GM12878 (cell line): ENCODE measurements at regions of chr3 and their contacts with region 1.

Region 1: DNA sequence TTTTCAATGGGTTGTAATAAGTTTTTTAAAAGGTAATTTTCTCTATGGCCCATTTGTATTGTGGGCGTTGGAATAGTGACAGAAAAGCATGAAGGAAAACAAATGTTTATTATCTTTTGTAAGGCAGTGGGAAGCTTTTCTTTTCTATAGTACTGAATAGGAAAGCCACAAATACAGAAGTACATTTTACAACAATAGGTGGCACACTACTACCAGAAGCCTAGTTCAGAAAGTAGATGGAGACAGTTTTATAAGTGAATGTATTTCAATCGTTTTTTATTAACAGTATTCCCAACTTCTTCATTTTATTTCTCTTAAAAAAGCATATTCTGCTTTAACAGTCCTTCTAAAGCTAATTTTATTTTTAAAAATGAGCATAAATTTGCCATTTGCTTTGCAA is 296.7 kb downstream of the PTPRG start:
- DNase-seq: no peak
- ATAC-seq: peak; percentile 53
- H3K4me3 ChIP-seq: no peak overlapping the region
- H3K27ac ChIP-seq: no peak overlapping the region
- H3K4me1 ChIP-seq: no peaks in the 10 kb centered on the region
- H3K27me3 ChIP-seq: peaks cover 0 to 3% of the 10 kb centered on the region in 2 experiments; a peak in 1 of 4 replicates
- CTCF ChIP-seq: peak; percentile 27 to 65 (median 29); a peak in 3 of 6 replicates
- EP300 ChIP-seq: no peak
- POLR2A ChIP-seq: no peak
- RAD21 ChIP-seq: peak; percentile 62

Region 2: GRCh38 chr3:61841111-61841853 is 16.8 kb before region 1 on chr3:
- CTCF ChIA-PET with region 1: interaction called, 13 read pairs
- POLR2A ChIA-PET with region 1: interaction called, 5 read pairs
- RAD21 ChIA-PET with region 1: interaction called, 8 read pairs
- SMC1A ChIA-PET with region 1: interaction called, 30 read pairs
- in situ Hi-C with region 1: no loop called
- intact Hi-C with region 1: no loop called
- DNase-seq: no peak
- ATAC-seq: no peak
- H3K4me3 ChIP-seq: no peak overlapping the region
- H3K27ac ChIP-seq: no peak overlapping the region
- H3K4me1 ChIP-seq: no peaks in the 10 kb centered on the region
- H3K27me3 ChIP-seq: no peaks in the 10 kb centered on the region
- CTCF ChIP-seq: no peak
- EP300 ChIP-seq: no peak
- POLR2A ChIP-seq: no peak
- RAD21 ChIP-seq: no peak

Region 3: DNA sequence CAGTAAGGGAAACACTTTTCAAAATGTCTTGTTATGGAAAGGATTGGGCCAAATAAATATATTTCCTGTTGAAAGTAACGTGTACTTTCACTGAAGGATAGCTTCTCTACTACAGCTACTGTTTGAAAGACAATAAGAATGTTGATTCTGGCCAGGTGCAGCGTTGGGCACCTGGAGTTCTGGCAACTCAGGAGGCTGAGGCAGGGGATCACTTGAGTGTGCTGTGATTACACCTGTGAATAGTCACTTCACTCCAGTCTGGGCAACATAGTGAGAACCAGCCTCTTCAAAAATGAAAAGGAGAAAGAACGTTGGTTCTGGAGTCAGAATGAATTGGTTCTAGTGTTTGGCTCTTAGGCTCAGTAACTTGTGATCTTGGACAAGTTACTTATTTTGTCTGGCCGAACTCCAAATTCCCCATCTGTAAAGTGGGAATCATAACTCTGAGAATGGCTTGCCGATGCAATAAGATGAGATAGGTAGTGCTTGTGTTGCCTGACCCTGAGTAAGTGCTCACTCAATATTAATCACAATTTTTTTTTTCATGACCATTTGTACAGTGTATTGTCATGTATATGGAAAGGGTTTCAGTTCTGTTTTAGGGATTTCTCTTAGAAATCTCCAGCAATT is 14.1 kb after region 1 on chr3:
- CTCF ChIA-PET with region 1: interaction called, 20 read pairs
- POLR2A ChIA-PET with region 1: interaction called, 3 read pairs
- RAD21 ChIA-PET with region 1: interaction called, 12 read pairs
- SMC1A ChIA-PET with region 1: interaction called, 17 read pairs
- in situ Hi-C with region 1: no loop called
- intact Hi-C with region 1: no loop called
- DNase-seq: no peak
- ATAC-seq: no peak
- H3K4me3 ChIP-seq: no peak overlapping the region
- H3K27ac ChIP-seq: no peak overlapping the region
- H3K4me1 ChIP-seq: no peaks in the 10 kb centered on the region
- H3K27me3 ChIP-seq: no peaks in the 10 kb centered on the region
- CTCF ChIP-seq: no peak
- EP300 ChIP-seq: no peak
- POLR2A ChIP-seq: no peak
- RAD21 ChIP-seq: no peak

Region 4: GRCh38 chr3:61890167-61890566 is 32.1 kb after region 1 on chr3:
- CTCF ChIA-PET with region 1: interaction called, 6 read pairs
- POLR2A ChIA-PET with region 1: no interaction called
- RAD21 ChIA-PET with region 1: interaction called, 15 read pairs
- SMC1A ChIA-PET with region 1: interaction called, 19 read pairs
- in situ Hi-C with region 1: no loop called
- intact Hi-C with region 1: no loop called
- DNase-seq: no peak
- ATAC-seq: peak; percentile 30
- H3K4me3 ChIP-seq: no peak overlapping the region
- H3K27ac ChIP-seq: no peak overlapping the region
- H3K4me1 ChIP-seq: peaks cover 5% of the 10 kb centered on the region; the same call in 1 of the 2 replicates
- H3K27me3 ChIP-seq: no peaks in the 10 kb centered on the region
- CTCF ChIP-seq: no peak
- EP300 ChIP-seq: no peak
- POLR2A ChIP-seq: no peak
- RAD21 ChIP-seq: no peak

Region 5: DNA sequence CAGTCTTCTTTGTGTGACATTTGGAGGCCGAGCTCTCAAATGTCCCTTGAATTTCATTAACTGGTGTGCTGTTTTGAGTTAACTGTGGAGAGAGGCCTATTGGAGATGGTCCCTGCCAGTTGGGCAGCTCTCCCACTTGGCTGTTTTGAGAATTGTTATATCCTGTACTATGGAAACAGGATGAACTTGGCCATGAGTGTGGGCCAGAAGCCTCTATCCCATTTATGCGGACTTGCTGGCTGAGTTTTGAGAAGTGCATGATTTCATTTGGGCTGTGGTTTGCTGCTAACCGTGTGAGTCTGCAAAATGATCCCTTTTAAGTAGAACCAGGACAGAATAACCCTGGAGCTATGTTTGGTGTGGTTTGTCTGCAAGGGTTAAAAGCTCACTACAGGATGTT is 69.3 kb after region 1 on chr3:
- CTCF ChIA-PET with region 1: interaction called, 15 read pairs
- POLR2A ChIA-PET with region 1: interaction called, 5 read pairs
- RAD21 ChIA-PET with region 1: interaction called, 11 read pairs
- SMC1A ChIA-PET with region 1: interaction called, 135 read pairs
- in situ Hi-C with region 1: no loop called
- intact Hi-C with region 1: no loop called
- DNase-seq: no peak
- ATAC-seq: no peak; the same call in 1 of the 3 replicates
- H3K4me3 ChIP-seq: no peak overlapping the region
- H3K27ac ChIP-seq: no peak overlapping the region
- H3K4me1 ChIP-seq: no peaks in the 10 kb centered on the region
- H3K27me3 ChIP-seq: no peaks in the 10 kb centered on the region; a peak in 1 of 4 replicates
- CTCF ChIP-seq: no peak
- EP300 ChIP-seq: no peak
- POLR2A ChIP-seq: no peak
- RAD21 ChIP-seq: no peak

Region 6: DNA sequence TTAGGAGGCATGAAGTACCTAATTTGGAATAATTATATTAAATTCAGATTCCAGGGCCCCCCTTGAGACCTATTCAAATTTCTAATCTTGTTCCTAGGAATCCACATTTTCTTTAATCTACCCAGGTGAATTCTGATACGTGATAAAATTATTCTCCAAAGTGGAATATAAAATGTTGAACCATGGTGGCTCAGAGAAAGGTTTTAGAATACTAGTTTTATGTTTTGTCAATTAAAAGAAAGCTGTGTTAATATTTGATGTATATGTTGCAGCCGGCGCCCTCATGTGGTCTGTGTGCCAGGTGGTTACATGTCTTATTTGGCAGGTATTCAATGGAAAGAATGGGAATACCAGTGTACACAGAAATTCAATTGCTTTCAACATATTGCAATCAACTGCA is 193.5 kb after region 1 on chr3:
- CTCF ChIA-PET with region 1: interaction called, 34 read pairs
- POLR2A ChIA-PET with region 1: no interaction called
- RAD21 ChIA-PET with region 1: interaction called, 22 read pairs
- SMC1A ChIA-PET with region 1: interaction called, 26 read pairs
- in situ Hi-C with region 1: no loop called
- intact Hi-C with region 1: loop called (anchors 5 kb)
- DNase-seq: no peak
- ATAC-seq: peak; percentile 26; the same call in 1 of the 3 replicates
- H3K4me3 ChIP-seq: no peak overlapping the region
- H3K27ac ChIP-seq: no peak overlapping the region
- H3K4me1 ChIP-seq: no peaks in the 10 kb centered on the region
- H3K27me3 ChIP-seq: no peaks in the 10 kb centered on the region; a peak in 1 of 4 replicates
- CTCF ChIP-seq: peak in 2 of 3 experiments; percentile 6 to 22; a peak in 2 of 6 replicates
- EP300 ChIP-seq: no peak
- POLR2A ChIP-seq: no peak
- RAD21 ChIP-seq: no peak

Region 7: GRCh38 chr3:62149962-62150361 is 291.9 kb after region 1 on chr3:
- CTCF ChIA-PET with region 1: interaction called, 11 read pairs
- POLR2A ChIA-PET with region 1: no interaction called
- RAD21 ChIA-PET with region 1: no interaction called
- SMC1A ChIA-PET with region 1: interaction called, 3 read pairs
- in situ Hi-C with region 1: no loop called
- intact Hi-C with region 1: no loop called
- DNase-seq: no peak
- ATAC-seq: peak; percentile 80
- H3K4me3 ChIP-seq: no peak overlapping the region
- H3K27ac ChIP-seq: no peak overlapping the region
- H3K4me1 ChIP-seq: no peaks in the 10 kb centered on the region
- H3K27me3 ChIP-seq: no peaks in the 10 kb centered on the region
- CTCF ChIP-seq: no peak
- EP300 ChIP-seq: no peak
- POLR2A ChIP-seq: no peak
- RAD21 ChIP-seq: no peak

Region 8: DNA sequence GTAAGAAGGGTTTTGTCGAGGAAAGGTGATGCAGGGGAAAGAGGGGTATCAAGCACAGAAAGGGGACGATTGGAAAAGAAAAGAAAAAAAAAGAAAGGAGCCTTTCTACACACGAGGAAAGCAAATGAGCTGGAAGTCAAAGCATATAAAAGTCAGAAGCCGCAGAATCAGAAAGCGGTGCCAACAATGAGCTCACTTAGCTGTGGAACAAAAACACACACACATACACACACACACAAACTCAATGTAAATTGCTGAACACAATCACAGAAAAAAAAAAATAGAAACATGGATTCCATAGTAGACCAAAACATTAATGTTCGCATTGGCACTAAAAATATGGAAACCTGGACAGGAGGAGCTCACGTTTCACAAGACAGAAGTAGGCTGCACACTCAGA is 578.7 kb after region 1 on chr3:
- CTCF ChIA-PET with region 1: no interaction called
- POLR2A ChIA-PET with region 1: no interaction called
- RAD21 ChIA-PET with region 1: no interaction called
- SMC1A ChIA-PET with region 1: no interaction called
- in situ Hi-C with region 1: no loop called
- intact Hi-C with region 1: no loop called
- DNase-seq: no peak
- ATAC-seq: no peak
- H3K4me3 ChIP-seq: no peak overlapping the region
- H3K27ac ChIP-seq: no peak overlapping the region
- H3K4me1 ChIP-seq: no peaks in the 10 kb centered on the region
- H3K27me3 ChIP-seq: no peaks in the 10 kb centered on the region
- CTCF ChIP-seq: no peak
- EP300 ChIP-seq: no peak
- POLR2A ChIP-seq: no peak
- RAD21 ChIP-seq: no peak